Posterior vena cava (tissue), 2 donors: ENCODE measurements at regions of chr1 and their contacts with region 1.

Region 1: GRCh38 chr1:241600496-241600901 is 39.7 kb downstream of the CHML start:
- DNase-seq: no peak

Region 2: GRCh38 chr1:241443561-241443960 is 156.9 kb before region 1 on chr1:
- intact Hi-C with region 1: no loop called
- DNase-seq: no peak

Region 3: GRCh38 chr1:241677201-241677600 is 76.7 kb after region 1 on chr1:
- intact Hi-C with region 1: no loop called
- DNase-seq: no peak

Region 4: GRCh38 chr1:241857131-241857530 is 256.6 kb after region 1 on chr1:
- intact Hi-C with region 1: loop called in 1 of 2 experiments (anchors 10 kb)
- DNase-seq: no peak

Region 5: DNA sequence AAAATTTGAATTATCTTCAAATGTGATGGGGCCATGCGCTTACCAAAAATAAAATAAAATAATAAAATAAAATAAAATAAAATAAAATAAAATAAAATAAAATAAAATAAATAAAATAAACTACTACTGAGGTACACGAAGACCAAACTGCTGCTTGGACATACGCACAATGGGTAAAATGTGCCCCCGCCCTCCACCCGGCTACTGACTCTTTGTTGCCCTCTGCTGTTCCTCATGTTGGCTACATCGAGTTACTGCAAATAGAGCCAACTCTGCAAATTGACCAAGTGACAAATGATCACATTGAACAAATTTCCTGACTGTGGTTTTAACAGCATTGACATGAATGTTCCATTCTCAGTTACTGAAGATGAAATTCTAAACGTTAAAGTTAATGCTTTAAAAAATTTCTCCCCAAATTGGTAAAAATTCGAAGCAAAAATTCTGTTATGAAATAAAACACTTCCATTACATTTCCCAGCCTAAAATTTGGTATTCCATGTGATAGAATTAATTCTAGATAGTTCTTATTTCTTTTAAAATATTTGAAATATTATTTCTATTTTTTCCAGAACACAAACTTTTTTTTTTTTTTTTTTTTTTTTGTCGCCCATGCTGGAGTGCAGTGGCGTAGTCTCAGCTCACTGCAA is 417.2 kb after region 1 on chr1:
- intact Hi-C with region 1: loop called in 1 of 2 experiments (anchors 10 kb)
- DNase-seq: no peak